Heart left ventricle (tissue), 16 donors: ENCODE measurements at regions of chr15 and their contacts with region 1.

Region 1: DNA sequence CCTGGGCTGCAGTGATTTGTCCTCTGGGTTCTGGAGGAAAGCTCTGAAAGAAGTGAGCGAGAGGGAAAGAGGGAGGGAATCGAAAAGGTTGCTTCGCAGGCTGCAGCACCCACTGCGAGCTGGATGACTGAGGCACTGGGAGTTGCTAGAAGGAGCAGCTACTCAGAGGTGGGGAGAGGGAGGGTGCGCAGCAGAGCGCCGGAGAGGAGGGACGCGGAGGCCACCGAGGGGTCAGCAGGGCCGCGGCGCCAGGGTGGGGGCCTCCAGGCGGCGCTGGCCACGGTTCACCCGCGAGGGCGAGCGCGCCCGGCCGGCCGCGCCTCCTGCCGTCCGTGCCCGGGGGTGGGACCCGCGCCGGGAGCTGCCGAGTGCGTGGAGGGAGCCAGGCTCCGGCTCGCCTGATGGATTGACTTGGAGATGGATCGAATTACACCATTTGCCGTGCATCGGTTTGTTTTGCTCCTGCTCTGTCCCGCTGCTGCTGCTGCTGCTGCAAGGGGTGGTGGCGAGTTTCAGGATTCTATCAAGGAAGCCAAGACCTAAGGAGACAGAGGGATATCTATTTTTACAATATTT is at the start of gene SEMA6D:
- DNase-seq: peak; percentile 77 to 89 (median 82)
- ATAC-seq: peak; percentile 76 to 84 (median 82)
- H3K4me3 ChIP-seq: peak within 1 kb of the TSS; percentile 62 to 96 (median 84)
- H3K27ac ChIP-seq: peak within 1 kb of the TSS; percentile 80 to 94 (median 86)
- H3K4me1 ChIP-seq: peaks cover 0 to 43% (median 24%) of the 10 kb centered on the region in 12 donors
- H3K27me3 ChIP-seq: peaks cover 0 to 33% (median 0%) of the 10 kb centered on the region in 9 donors
- CTCF ChIP-seq: peak in 11 of 12 donors; percentile 30 to 69 (median 54)
- POLR2A ChIP-seq: no peak
- total RNA-seq, gene SEMA6D: 4.9 to 23.2 (median 10.9) TPM

Region 2: DNA sequence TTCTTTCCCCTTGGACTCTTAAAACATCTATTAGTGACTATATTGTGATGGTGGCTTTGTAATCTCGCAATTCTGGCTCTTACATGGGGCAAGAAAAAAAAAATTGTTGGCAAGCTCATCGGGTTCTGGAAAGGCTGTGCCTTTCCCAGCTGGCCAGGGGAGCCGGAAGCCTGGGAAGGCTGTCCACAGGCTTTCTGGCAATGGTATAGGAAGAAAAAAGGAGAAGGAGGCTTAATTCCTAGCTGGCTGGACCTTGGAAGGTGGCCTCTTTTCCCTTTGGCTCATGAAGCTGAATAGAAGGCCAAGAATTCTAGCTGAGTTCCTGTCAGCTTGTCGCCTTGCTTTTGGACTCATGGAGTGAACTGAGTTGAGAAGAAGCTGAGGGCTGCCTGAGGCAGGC is 243.3 kb before region 1 on chr15:
- intact Hi-C with region 1: loop called in 3 of 10 experiments (anchors 2 to 5 kb)
- DNase-seq: peak; percentile 63 to 76 (median 74)
- ATAC-seq: peak; percentile 93 to 97 (median 94)
- H3K4me3 ChIP-seq: no peak overlapping the region
- H3K27ac ChIP-seq: peak overlapping the region in 8 of 12 donors; percentile 7 to 57 (median 34)
- H3K4me1 ChIP-seq: peaks cover 0 to 28% (median 14%) of the 10 kb centered on the region in 12 donors
- H3K27me3 ChIP-seq: no peaks in the 10 kb centered on the region
- CTCF ChIP-seq: no peak
- POLR2A ChIP-seq: no peak

Region 3: DNA sequence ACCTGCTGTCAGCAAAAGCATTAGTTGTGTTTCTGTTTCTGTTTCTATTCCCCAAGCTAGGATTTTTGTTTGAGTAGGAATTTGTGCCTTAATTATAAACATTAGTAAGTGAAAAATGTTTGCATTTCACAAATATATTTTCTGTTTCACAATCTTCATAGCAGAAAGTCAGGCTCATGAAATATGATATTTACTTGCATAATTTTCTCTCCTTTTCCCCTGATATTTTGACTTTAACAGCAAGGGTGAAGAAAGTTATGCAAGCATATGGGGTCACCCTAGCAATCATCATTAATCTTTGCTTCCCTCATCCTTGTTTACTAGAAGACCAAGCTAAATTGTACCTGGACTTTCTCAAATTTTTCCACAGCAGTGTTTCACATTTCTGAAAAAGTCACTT is 140.1 kb before region 1 on chr15:
- intact Hi-C with region 1: loop called in 2 of 10 experiments (anchors 10 kb)
- DNase-seq: no peak
- ATAC-seq: no peak
- H3K4me3 ChIP-seq: no peak overlapping the region
- H3K27ac ChIP-seq: no peak overlapping the region
- H3K4me1 ChIP-seq: peaks cover 0 to 11% (median 5%) of the 10 kb centered on the region in 12 donors
- H3K27me3 ChIP-seq: no peaks in the 10 kb centered on the region
- CTCF ChIP-seq: no peak
- POLR2A ChIP-seq: no peak

Region 4: GRCh38 chr15:47602121-47602520 is 115.0 kb before region 1 on chr15:
- intact Hi-C with region 1: no loop called
- DNase-seq: no peak
- ATAC-seq: no peak
- H3K4me3 ChIP-seq: no peak overlapping the region
- H3K27ac ChIP-seq: no peak overlapping the region
- H3K4me1 ChIP-seq: no peaks in the 10 kb centered on the region
- H3K27me3 ChIP-seq: peaks cover 0 to 15% (median 0%) of the 10 kb centered on the region in 9 donors
- CTCF ChIP-seq: no peak
- POLR2A ChIP-seq: no peak

Region 5: GRCh38 chr15:47756872-47757271 is 39.7 kb after region 1 on chr15:
- intact Hi-C with region 1: loop called in 1 of 10 experiments (anchors 5 kb)
- DNase-seq: peak in 1 of 5 donors; percentile 47
- ATAC-seq: peak; percentile 15 to 85 (median 66)
- H3K4me3 ChIP-seq: no peak overlapping the region
- H3K27ac ChIP-seq: no peak overlapping the region
- H3K4me1 ChIP-seq: peaks cover 0 to 16% (median 0%) of the 10 kb centered on the region in 12 donors
- H3K27me3 ChIP-seq: no peaks in the 10 kb centered on the region
- CTCF ChIP-seq: no peak
- POLR2A ChIP-seq: no peak

Region 6: GRCh38 chr15:47786371-47786770 is 69.2 kb after region 1 on chr15:
- intact Hi-C with region 1: no loop called
- DNase-seq: no peak
- ATAC-seq: no peak
- H3K4me3 ChIP-seq: no peak overlapping the region
- H3K27ac ChIP-seq: no peak overlapping the region
- H3K4me1 ChIP-seq: no peaks in the 10 kb centered on the region
- H3K27me3 ChIP-seq: no peaks in the 10 kb centered on the region
- CTCF ChIP-seq: no peak
- POLR2A ChIP-seq: no peak

Region 7: GRCh38 chr15:47796830-47797229 is 79.7 kb after region 1 on chr15:
- intact Hi-C with region 1: loop called in 1 of 10 experiments (anchors 5 kb)
- DNase-seq: no peak
- ATAC-seq: no peak
- H3K4me3 ChIP-seq: no peak overlapping the region
- H3K27ac ChIP-seq: no peak overlapping the region
- H3K4me1 ChIP-seq: peaks cover 0 to 28% (median 13%) of the 10 kb centered on the region in 12 donors
- H3K27me3 ChIP-seq: no peaks in the 10 kb centered on the region
- CTCF ChIP-seq: no peak
- POLR2A ChIP-seq: no peak